Brain microvascular endothelial cell (primary cell): ENCODE measurements at regions of chr3 and their contacts with region 1.

Region 1: GRCh38 chr3:58008140-58009025 is at the start of gene FLNB:
- DNase-seq: peak; percentile 53
- H3K4me3 ChIP-seq: peak within 1 kb of the TSS; percentile 99
- H3K27ac ChIP-seq: peak within 1 kb of the TSS; percentile 76
- H3K27me3 ChIP-seq: no peaks in the 10 kb centered on the region
- CTCF ChIP-seq: peak; percentile 74

Region 2: GRCh38 chr3:58167431-58168351 is 159.3 kb after region 1 on chr3:
- in situ Hi-C with region 1: loop called (anchors 25 kb)
- DNase-seq: peak; percentile 68
- H3K4me3 ChIP-seq: no peak overlapping the region
- H3K27ac ChIP-seq: no peak overlapping the region
- H3K27me3 ChIP-seq: no peaks in the 10 kb centered on the region
- CTCF ChIP-seq: peak; percentile 99

Region 3: DNA sequence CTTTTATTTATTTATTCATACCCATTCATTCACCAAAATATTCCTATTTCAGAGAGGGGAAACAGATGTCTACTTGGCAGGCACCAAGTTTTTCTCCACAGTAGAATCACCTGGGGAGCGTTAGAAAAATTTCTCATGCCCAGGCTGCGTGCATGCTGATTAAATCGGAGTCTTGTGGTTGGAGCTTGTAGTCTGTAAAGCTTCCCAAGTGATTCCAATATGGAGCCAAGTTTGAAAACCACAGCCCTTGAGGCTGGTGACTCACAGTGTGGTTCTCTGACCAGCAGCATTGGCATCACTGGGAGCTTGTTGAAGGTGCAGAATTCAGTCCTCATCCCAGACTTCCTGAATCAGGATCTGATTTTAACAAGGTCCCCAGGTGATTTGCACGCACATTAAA is 375.5 kb after region 1 on chr3:
- in situ Hi-C with region 1: no loop called
- DNase-seq: peak; percentile 96
- H3K4me3 ChIP-seq: no peak overlapping the region
- H3K27ac ChIP-seq: peak overlapping the region; percentile 87
- H3K27me3 ChIP-seq: no peaks in the 10 kb centered on the region
- CTCF ChIP-seq: no peak